ENCODE measurements at regions of chr13 and their contacts with region 1.

Region 1: DNA sequence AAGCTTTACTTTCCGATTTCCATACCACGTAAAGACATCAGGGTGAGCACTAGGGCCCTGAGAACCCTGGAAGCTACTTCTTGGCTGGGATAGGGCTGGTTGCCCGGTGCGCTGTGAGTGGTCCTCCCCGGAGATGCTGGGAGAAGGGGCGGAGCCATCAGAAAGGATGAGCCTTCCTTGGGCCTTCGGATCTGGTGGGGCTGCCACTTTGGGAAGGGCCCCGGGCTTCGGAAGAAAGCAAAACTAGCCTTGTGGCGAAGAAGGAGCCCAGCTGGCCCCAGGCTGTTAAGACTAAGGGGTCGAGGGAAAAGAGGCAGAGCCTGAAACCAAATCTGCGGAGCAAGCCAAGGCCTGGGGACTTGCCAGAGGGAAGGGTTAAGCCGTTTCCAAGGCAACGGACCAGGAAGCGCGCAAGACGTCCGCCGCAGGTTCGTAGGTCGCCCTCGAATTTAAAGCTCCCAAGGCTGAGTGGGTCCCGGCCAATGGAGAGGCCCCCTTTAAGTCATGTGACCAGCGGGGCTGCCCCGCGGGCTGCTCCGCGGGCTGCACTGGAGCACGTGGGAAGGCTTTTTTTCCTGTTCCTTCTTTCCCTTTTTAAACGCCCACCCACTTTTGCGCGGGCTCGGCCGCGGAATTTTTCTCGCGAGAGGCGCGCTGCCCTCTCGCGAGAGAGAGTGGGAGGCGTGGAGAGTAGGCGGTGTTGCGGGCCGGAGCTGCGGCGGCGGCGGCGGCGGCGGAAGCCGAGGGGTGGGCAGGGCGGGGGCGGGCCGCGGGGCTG is 426 bp upstream of the AKAP11 start:
- DNase-seq: peak; percentile 94 to 96 (median 95)
- ATAC-seq: peak; percentile 96 to 99 (median 98)
- H3K4me3 ChIP-seq: peak overlapping the region; percentile 85 to 98 (median 90)
- H3K27ac ChIP-seq: peak overlapping the region; percentile 68 to 94 (median 90)
- H3K4me1 ChIP-seq: peaks cover 0 to 47% (median 20%) of the 10 kb centered on the region in 12 donors
- H3K27me3 ChIP-seq: no peaks in the 10 kb centered on the region
- CTCF ChIP-seq: no peak
- POLR2A ChIP-seq: no peak

Region 2: GRCh38 chr13:42283574-42283973 is 12.0 kb after region 1 on chr13:
- intact Hi-C with region 1: loop called in 1 of 10 experiments (anchors 1 kb)
- DNase-seq: no peak
- ATAC-seq: peak in 1 of 4 donors; percentile 72
- H3K4me3 ChIP-seq: no peak overlapping the region
- H3K27ac ChIP-seq: peak overlapping the region in 1 of 12 donors; percentile 8
- H3K4me1 ChIP-seq: peaks cover 0 to 27% (median 9%) of the 10 kb centered on the region in 12 donors
- H3K27me3 ChIP-seq: no peaks in the 10 kb centered on the region
- CTCF ChIP-seq: no peak
- POLR2A ChIP-seq: no peak

Region 3: DNA sequence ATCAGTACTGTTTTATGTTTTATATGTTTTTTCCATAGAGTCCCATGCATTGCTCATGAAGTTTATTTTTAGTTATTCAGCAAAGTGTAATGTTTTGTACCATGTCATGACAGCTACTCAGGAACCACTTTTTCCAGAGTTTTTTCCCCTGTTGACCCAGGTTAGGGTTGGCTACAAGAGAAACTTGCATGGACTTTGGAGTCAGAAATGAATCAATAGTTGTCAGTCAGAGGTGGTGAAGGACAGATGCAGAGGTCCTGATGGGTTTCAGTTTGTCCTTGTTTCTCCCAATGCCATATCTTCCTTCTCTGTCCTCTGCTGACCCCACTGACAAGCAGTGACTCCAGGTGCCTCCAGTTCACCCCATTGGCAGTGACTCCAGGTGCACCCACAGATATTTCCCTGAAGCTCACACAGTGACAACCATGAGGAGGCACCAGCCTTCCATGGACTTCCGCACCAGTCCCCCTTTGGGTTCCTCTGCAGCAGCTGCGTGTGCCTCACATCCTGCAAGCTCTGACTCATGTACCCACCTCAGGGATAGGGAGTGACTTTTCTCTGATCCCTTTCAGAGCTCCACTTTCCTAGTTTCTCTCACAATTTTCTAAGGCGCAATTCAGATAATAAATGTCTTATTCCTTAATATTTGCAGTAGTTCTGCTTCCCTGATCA is 92.6 kb after region 1 on chr13:
- intact Hi-C with region 1: no loop called
- DNase-seq: no peak
- ATAC-seq: no peak
- H3K4me3 ChIP-seq: no peak overlapping the region
- H3K27ac ChIP-seq: no peak overlapping the region
- H3K4me1 ChIP-seq: no peaks in the 10 kb centered on the region
- H3K27me3 ChIP-seq: no peaks in the 10 kb centered on the region
- CTCF ChIP-seq: no peak
- POLR2A ChIP-seq: no peak

Measured in heart left ventricle (tissue), 16 donors.